Activated CD4-positive, alpha-beta memory T cell treated with anti-CD3 and anti-CD28 coated beads, Interleukin-2, amount 10 ng/mL, durations not matched to agents 7 days and 5 days (primary cell): ENCODE measurements at regions of chr2 and their contacts with region 1.

Region 1: DNA sequence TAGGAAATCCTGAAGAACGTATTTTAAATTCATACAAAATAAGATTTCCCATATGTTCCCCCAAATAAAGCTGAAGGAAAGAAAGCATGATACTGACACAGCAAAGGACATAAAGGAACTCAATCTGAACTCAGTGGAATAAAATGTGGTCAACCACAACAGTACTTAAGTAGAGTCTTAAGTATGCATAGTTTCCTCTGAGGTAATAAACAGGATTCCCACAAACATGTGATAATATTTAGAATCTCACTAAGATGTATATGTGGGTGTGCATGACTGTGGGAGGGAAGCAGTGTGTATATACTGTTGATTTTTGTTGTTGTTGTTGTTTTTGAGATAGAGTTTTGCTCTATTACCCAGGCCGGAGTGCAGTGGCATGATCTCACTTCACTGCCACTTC is 69.3 kb downstream of the NOL10 start:
- DNase-seq: peak; percentile 28
- H3K4me3 Mint-ChIP-seq: no peak overlapping the region
- H3K27ac Mint-ChIP-seq: peak overlapping the region; percentile 60
- H3K4me1 Mint-ChIP-seq: peaks cover 36% of the 10 kb centered on the region
- H3K27me3 Mint-ChIP-seq: no peaks in the 10 kb centered on the region

Region 2: DNA sequence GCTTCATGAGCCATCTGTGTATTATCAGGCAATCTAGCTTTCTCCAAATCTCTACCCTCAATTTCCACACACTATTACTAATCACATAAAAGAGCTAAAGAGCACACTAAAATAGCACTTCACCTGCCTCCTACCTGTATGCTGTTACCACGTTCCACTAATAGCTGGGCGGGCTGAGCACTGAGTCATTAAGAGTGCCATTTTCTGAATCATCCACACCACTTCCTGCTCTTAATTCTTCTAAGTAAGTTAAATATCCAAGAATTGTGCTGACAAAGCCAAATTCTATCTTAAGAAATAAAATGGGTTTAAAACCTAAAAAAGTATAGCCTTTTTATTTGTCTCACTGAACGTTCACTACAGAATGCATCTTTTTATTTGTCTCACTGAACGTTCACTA is 33.6 kb after region 1 on chr2:
- CTCF ChIA-PET with region 1: interaction called, 10 read pairs
- POLR2A ChIA-PET with region 1: interaction called, 10 read pairs
- DNase-seq: peak; percentile 78
- H3K4me3 Mint-ChIP-seq: peak overlapping the region; percentile 0
- H3K27ac Mint-ChIP-seq: peak overlapping the region; percentile 62
- H3K4me1 Mint-ChIP-seq: peaks cover 66% of the 10 kb centered on the region
- H3K27me3 Mint-ChIP-seq: no peaks in the 10 kb centered on the region